ENCODE measurements at regions of chr17 and their contacts with region 1.

Region 1: GRCh38 chr17:77331301-77331864 is 190.6 kb downstream of the SEC14L1 start:
- DNase-seq: peak; percentile 98
- H3K4me3 ChIP-seq: peak overlapping the region in 1 of 2 experiments; percentile 27; a peak in 1 of 4 replicates
- H3K27ac ChIP-seq: peak overlapping the region; percentile 50 to 70
- H3K4me1 ChIP-seq: peaks cover 0 to 14% of the 10 kb centered on the region in 2 experiments; a peak in 1 of 4 replicates
- H3K27me3 ChIP-seq: no peaks in the 10 kb centered on the region
- CTCF ChIP-seq: peak; percentile 98
- EP300 ChIP-seq: peak in 1 of 2 experiments; percentile 15; a peak in 2 of 4 replicates
- RAD21 ChIP-seq: peak; percentile 100

Region 2: DNA sequence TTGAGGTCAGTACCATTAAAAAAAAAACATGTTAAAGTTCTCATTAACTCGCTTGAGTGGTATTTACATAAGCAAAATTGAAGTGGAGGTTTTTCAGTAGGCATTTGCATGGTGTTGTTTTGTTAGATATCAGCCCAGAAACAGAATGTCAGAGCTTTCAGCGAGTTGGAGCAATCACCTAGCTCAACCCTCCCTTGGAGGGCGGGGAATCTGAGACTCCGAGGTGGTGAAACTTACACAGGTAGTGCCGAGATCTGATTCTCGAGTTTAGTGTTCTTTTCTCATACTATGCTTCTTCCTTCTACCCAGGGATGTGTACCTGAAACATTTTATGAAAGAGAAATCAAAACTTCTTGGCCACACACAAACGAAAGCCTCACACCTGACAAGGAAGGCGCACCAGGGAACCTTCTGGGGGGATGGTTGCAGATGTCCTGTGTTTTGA is 184.0 kb before region 1 on chr17:
- CTCF ChIA-PET with region 1: no interaction called
- POLR2A ChIA-PET with region 1: no interaction called
- DNase-seq: no peak
- H3K4me3 ChIP-seq: no peak overlapping the region
- H3K27ac ChIP-seq: no peak overlapping the region
- H3K4me1 ChIP-seq: peaks cover 11 to 24% of the 10 kb centered on the region in 2 experiments
- H3K27me3 ChIP-seq: no peaks in the 10 kb centered on the region
- CTCF ChIP-seq: no peak
- EP300 ChIP-seq: no peak
- RAD21 ChIP-seq: no peak

Region 3: DNA sequence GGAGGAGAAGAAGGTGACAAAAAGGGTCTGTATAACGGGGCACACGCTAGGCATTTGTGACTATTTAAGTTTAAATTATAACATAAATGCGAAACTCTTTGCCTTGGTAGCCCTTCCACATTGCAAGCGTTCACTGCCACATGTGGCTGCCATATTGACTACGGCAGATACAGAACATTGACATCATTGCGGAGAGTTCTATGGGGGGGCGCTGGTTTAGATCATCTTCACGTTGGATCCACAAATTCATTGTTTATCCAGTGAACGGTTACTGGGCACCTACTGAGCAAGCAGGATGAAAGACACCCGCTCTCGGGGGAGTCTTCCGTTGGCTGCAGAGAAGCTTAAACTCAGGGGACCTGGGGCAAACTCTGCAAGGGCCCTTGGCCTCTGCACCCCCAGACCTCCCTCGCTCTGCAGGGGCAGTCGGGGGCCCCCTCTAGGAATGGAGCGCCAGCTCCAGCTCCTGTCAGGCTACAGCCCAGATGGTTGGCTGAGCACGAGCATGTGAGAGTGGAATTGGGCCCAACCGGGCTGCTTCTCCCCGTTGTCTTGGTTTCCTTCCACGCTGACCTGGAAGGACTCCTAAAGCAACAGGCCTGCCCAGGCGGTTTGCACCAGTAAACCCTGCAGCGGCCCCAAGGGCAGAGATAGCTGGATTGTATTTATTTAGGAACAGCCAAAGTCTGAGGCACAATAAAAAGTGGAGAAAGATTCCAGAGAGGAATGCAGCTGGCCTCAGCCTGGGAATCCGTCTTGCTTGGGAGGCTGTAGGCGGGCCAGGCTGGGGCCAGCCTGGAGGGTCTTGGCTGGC is 18.4 kb before region 1 on chr17:
- CTCF ChIA-PET with region 1: interaction called, 19 read pairs
- POLR2A ChIA-PET with region 1: no interaction called
- DNase-seq: peak; percentile 29
- H3K4me3 ChIP-seq: no peak overlapping the region
- H3K27ac ChIP-seq: peak overlapping the region in 1 of 2 experiments; percentile 3; a peak in 1 of 4 replicates
- H3K4me1 ChIP-seq: peaks cover 42 to 67% of the 10 kb centered on the region in 2 experiments
- H3K27me3 ChIP-seq: no peaks in the 10 kb centered on the region
- CTCF ChIP-seq: no peak
- EP300 ChIP-seq: no peak
- RAD21 ChIP-seq: no peak

Region 4: DNA sequence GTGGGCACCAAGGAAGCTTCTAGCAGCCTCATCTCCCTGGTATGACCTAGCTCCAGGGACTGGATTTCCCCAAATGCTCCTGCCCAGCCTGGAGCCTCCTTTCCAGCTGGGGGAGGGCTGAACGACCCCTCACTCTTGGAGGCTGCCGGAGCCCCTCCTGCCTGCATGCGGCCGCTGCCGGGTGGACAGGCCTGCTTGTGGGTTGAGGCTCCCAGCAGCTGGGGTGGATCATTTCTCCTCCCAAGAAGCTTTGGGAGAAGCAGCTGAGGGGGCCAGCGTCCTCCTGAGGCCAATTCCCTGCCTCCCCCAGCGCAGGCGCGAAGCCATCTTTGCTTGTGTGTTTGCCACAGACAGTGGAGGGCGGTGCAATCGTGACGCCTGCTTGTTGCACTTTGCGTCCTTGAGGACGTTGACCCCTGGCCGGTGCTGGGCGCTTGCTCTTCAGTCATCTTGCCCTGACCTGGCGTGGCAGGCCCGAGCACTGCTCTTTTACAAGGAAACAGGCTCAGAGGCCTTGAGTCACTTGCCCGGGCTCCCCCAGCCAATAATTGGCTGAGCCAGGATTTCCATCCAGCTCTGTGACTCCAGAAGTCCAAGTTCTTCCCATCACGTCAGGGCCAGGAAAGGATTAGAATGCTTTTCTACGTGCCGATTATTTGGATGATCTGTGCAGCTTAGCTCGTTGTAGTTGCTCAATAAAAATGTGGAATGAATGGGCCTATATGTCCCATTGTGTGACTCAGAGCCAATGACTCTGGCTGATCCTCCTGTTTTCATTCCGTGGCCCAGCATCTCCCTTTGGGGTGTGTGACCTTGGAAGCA is 23.2 kb after region 1 on chr17:
- CTCF ChIA-PET with region 1: interaction called, 127 read pairs
- POLR2A ChIA-PET with region 1: no interaction called
- DNase-seq: no peak
- H3K4me3 ChIP-seq: no peak overlapping the region
- H3K27ac ChIP-seq: peak overlapping the region; percentile 3 to 28; a peak in 3 of 4 replicates
- H3K4me1 ChIP-seq: peaks cover 9 to 55% of the 10 kb centered on the region in 2 experiments; a peak in 2 of 4 replicates
- H3K27me3 ChIP-seq: no peaks in the 10 kb centered on the region
- CTCF ChIP-seq: no peak
- EP300 ChIP-seq: no peak
- RAD21 ChIP-seq: no peak

Region 5: GRCh38 chr17:77391668-77392375 is 60.4 kb after region 1 on chr17:
- CTCF ChIA-PET with region 1: interaction called, 85 read pairs
- POLR2A ChIA-PET with region 1: interaction called, 3 read pairs
- DNase-seq: no peak
- H3K4me3 ChIP-seq: no peak overlapping the region
- H3K27ac ChIP-seq: peak overlapping the region; percentile 73 to 83
- H3K4me1 ChIP-seq: peaks cover 60 to 76% of the 10 kb centered on the region in 2 experiments
- H3K27me3 ChIP-seq: no peaks in the 10 kb centered on the region
- CTCF ChIP-seq: no peak
- EP300 ChIP-seq: no peak; a peak in 1 of 4 replicates
- RAD21 ChIP-seq: no peak

Region 6: DNA sequence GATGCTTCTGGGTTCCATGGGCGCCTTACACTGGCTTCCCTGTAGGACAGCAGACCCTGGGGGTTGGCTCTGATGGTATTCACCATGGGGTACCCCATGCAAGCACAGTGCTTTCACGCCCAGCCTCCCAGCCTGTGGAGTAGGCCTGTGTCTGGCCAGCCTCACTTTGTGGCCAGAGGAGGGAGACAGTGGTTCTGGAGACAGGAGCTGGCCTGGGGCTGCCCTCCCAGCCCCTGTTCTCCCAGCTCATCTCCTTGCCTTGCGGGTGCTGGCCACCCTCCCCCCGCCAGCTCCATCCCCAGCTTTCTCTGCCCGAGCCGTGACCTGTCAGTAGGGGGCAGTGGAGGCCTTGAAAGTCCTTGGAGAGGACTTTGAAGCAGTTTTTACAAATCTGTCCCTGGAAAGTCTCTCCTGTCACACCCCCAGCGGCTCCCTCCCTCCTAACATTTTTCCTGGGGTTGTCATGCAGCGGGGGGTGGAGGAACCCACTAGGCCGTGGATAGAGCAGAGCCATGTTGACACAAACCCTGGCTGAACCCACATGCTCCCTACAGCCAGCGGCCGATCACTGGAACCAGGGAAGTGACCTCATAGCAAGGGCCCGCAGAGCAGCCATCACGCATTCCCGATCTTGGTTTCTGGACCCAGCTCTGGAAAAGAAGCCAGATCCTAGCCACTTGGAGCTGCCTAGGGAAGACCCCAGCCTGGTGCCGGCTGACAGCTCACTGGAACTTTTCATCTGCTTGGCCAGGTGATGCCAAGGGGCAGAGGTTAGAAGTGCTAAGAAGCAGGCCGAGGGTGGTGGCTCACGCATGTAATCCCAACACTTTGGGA is 98.8 kb after region 1 on chr17:
- CTCF ChIA-PET with region 1: interaction called, 205 read pairs
- POLR2A ChIA-PET with region 1: no interaction called
- DNase-seq: peak; percentile 93
- H3K4me3 ChIP-seq: peak overlapping the region in 1 of 2 experiments; percentile 42; a peak in 1 of 4 replicates
- H3K27ac ChIP-seq: peak overlapping the region; percentile 78 to 97
- H3K4me1 ChIP-seq: peaks cover 82 to 87% of the 10 kb centered on the region in 2 experiments
- H3K27me3 ChIP-seq: no peaks in the 10 kb centered on the region
- CTCF ChIP-seq: peak; percentile 99
- EP300 ChIP-seq: peak; percentile 80 to 98
- RAD21 ChIP-seq: peak; percentile 98

Region 7: GRCh38 chr17:77476931-77477877 is 145.8 kb after region 1 on chr17:
- CTCF ChIA-PET with region 1: interaction called, 19 read pairs
- POLR2A ChIA-PET with region 1: no interaction called
- DNase-seq: peak; percentile 91
- H3K4me3 ChIP-seq: no peak overlapping the region
- H3K27ac ChIP-seq: peak overlapping the region; percentile 57 to 86
- H3K4me1 ChIP-seq: peaks cover 65 to 85% of the 10 kb centered on the region in 2 experiments
- H3K27me3 ChIP-seq: no peaks in the 10 kb centered on the region
- CTCF ChIP-seq: no peak
- EP300 ChIP-seq: peak in 1 of 2 experiments; percentile 73; a peak in 2 of 4 replicates
- RAD21 ChIP-seq: peak; percentile 34; the same call in 1 of the 2 replicates